H1 (cell line): ENCODE measurements at regions of chr22 and their contacts with region 1.

Region 1: GRCh38 chr22:33057363-33057995 is 702 bp downstream of the SYN3 start:
- DNase-seq: no peak
- H3K4me3 ChIP-seq: peak overlapping the region; percentile 74 to 93 (median 83)
- H3K27ac ChIP-seq: no peak overlapping the region
- H3K4me1 ChIP-seq: peaks cover 5 to 38% (median 26%) of the 10 kb centered on the region in 4 experiments; a peak in 5 of 7 replicates
- H3K27me3 ChIP-seq: peaks cover 0 to 12% (median 7%) of the 10 kb centered on the region in 4 experiments; a peak in 6 of 7 replicates
- CTCF ChIP-seq: no peak
- EP300 ChIP-seq: no peak
- POLR2A ChIP-seq: no peak
- RAD21 ChIP-seq: no peak

Region 2: DNA sequence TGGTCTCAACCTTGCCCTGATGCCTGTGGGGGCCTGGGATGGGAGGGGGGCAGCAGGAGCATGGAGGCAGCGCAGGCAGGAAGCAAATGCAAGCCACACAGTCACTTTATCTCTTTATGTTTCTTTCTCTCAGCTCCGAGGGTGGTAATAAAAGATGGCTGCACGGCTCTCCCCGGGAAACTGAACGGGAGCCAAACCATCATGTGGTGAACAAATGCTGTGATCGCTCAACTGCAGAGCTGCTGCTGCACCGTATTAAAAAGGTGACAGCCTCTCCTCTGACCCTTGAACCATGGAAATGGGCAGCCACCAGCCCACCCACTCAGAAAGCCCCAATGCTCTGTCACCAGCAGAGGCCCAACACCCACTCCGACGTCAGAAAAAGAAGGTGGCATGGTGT is 146.0 kb before region 1 on chr22:
- CTCF ChIA-PET with region 1: no interaction called
- POLR2A ChIA-PET with region 1: no interaction called
- DNase-seq: no peak
- H3K4me3 ChIP-seq: no peak overlapping the region
- H3K27ac ChIP-seq: no peak overlapping the region
- H3K4me1 ChIP-seq: peaks cover 0 to 3% (median 1%) of the 10 kb centered on the region in 4 experiments; a peak in 1 of 7 replicates
- H3K27me3 ChIP-seq: no peaks in the 10 kb centered on the region
- CTCF ChIP-seq: no peak
- EP300 ChIP-seq: no peak
- POLR2A ChIP-seq: no peak
- RAD21 ChIP-seq: no peak

Region 3: GRCh38 chr22:33000342-33001280 is 56.9 kb before region 1 on chr22:
- CTCF ChIA-PET with region 1: interaction called, 10 read pairs
- POLR2A ChIA-PET with region 1: no interaction called
- DNase-seq: peak; percentile 74 to 92
- H3K4me3 ChIP-seq: peak overlapping the region in 1 of 4 experiments; percentile 30; a peak in 3 of 8 replicates
- H3K27ac ChIP-seq: no peak overlapping the region
- H3K4me1 ChIP-seq: peaks cover 0 to 9% (median 3%) of the 10 kb centered on the region in 4 experiments; a peak in 4 of 7 replicates
- H3K27me3 ChIP-seq: no peaks in the 10 kb centered on the region
- CTCF ChIP-seq: peak; percentile 92 to 98 (median 96)
- EP300 ChIP-seq: no peak
- POLR2A ChIP-seq: no peak
- RAD21 ChIP-seq: peak; percentile 91 to 95

Region 4: DNA sequence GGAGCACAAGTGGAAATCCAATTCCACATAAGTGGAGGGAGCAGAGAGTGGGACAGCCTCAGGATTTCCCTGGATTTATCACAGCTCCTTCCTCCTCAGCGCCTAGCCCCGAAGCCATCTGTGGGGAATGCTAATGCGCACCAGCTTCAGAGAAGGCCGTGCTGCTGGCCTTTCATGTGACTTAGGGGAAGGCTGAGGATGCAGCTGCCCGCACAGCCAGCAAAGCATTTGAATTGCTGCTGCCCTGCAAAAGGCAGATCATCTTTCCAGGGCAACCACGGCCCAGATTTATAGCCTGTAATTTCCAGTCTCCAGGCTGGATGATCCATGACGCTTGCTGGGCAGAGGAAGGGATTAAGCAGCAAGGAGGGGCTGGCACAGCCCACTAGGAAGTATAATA is 29.2 kb before region 1 on chr22:
- CTCF ChIA-PET with region 1: interaction called, 16 read pairs
- POLR2A ChIA-PET with region 1: interaction called, 5 read pairs
- DNase-seq: peak in 1 of 2 experiments; percentile 39
- H3K4me3 ChIP-seq: no peak overlapping the region
- H3K27ac ChIP-seq: no peak overlapping the region
- H3K4me1 ChIP-seq: peaks cover 0 to 7% (median 0%) of the 10 kb centered on the region in 4 experiments; a peak in 2 of 7 replicates
- H3K27me3 ChIP-seq: no peaks in the 10 kb centered on the region
- CTCF ChIP-seq: no peak
- EP300 ChIP-seq: no peak
- POLR2A ChIP-seq: no peak
- RAD21 ChIP-seq: no peak

Region 5: GRCh38 chr22:33038131-33038772 is 19.2 kb before region 1 on chr22:
- CTCF ChIA-PET with region 1: interaction called, 49 read pairs
- POLR2A ChIA-PET with region 1: interaction called, 9 read pairs
- DNase-seq: no peak
- H3K4me3 ChIP-seq: no peak overlapping the region
- H3K27ac ChIP-seq: no peak overlapping the region
- H3K4me1 ChIP-seq: peaks cover 6 to 20% (median 13%) of the 10 kb centered on the region in 4 experiments; a peak in 6 of 7 replicates
- H3K27me3 ChIP-seq: peaks cover 0 to 2% (median 0%) of the 10 kb centered on the region in 4 experiments; a peak in 1 of 7 replicates
- CTCF ChIP-seq: no peak
- EP300 ChIP-seq: no peak
- POLR2A ChIP-seq: no peak
- RAD21 ChIP-seq: no peak

Region 6: DNA sequence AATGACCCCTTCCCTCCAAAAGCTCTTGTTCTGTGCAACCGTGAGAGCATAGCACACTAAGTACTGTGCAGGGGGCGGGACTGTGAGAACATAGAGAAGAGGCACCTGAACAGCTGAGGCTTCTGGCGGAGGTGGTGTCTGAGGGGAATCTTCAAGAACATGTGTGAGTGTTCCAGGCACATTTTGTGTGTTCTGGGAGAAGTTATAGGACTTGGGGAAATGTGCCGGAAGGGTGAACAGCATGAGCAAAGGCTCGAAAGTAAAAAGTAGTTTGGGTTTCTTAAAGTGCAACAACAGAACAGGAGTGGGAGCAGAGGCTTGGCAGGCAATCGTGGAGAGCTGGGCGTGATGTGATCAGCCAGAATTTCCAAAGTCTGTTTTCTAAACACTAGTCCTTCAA is 13.1 kb after region 1 on chr22:
- CTCF ChIA-PET with region 1: interaction called, 13 read pairs
- POLR2A ChIA-PET with region 1: interaction called, 5 read pairs
- DNase-seq: no peak
- H3K4me3 ChIP-seq: no peak overlapping the region
- H3K27ac ChIP-seq: no peak overlapping the region
- H3K4me1 ChIP-seq: peaks cover 0 to 4% (median 0%) of the 10 kb centered on the region in 4 experiments; a peak in 1 of 7 replicates
- H3K27me3 ChIP-seq: no peaks in the 10 kb centered on the region; a peak in 2 of 7 replicates
- CTCF ChIP-seq: no peak
- EP300 ChIP-seq: no peak
- POLR2A ChIP-seq: no peak
- RAD21 ChIP-seq: no peak

Region 7: DNA sequence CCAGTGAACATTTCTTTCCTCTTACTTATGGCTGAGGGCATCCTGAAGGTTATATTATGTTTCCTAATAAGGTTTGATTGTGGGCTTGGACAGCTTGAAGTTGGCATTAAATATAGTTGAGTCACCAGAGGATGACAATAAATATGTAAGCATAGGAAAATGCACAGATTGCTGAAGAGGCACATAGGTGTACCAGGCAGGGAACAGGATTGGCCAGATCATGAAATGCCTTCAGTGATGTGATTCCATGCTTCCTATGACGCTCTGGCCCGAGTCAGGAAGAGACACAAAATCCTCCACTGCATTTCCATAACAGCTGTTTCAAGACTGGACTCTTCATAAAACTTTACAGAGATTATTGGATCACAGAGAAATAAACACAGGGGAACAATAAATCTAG is 42.1 kb after region 1 on chr22:
- CTCF ChIA-PET with region 1: interaction called, 13 read pairs
- POLR2A ChIA-PET with region 1: interaction called, 3 read pairs
- DNase-seq: no peak
- H3K4me3 ChIP-seq: no peak overlapping the region
- H3K27ac ChIP-seq: no peak overlapping the region
- H3K4me1 ChIP-seq: peaks cover 0 to 3% (median 0%) of the 10 kb centered on the region in 4 experiments; a peak in 1 of 7 replicates
- H3K27me3 ChIP-seq: no peaks in the 10 kb centered on the region; a peak in 1 of 7 replicates
- CTCF ChIP-seq: no peak
- EP300 ChIP-seq: no peak
- POLR2A ChIP-seq: no peak
- RAD21 ChIP-seq: no peak

Region 8: GRCh38 chr22:33126881-33127280 is 69.4 kb after region 1 on chr22:
- CTCF ChIA-PET with region 1: interaction called, 11 read pairs
- POLR2A ChIA-PET with region 1: no interaction called
- DNase-seq: peak in 1 of 2 experiments; percentile 13
- H3K4me3 ChIP-seq: no peak overlapping the region
- H3K27ac ChIP-seq: no peak overlapping the region
- H3K4me1 ChIP-seq: no peaks in the 10 kb centered on the region
- H3K27me3 ChIP-seq: peaks cover 0 to 3% (median 0%) of the 10 kb centered on the region in 4 experiments; a peak in 1 of 7 replicates
- CTCF ChIP-seq: peak in 2 of 3 experiments; percentile 72 to 79; a peak in 3 of 4 replicates
- EP300 ChIP-seq: no peak
- POLR2A ChIP-seq: no peak
- RAD21 ChIP-seq: peak; percentile 96 to 97